ENCODE measurements at regions of chr1 and their contacts with region 1.

Region 1: GRCh38 chr1:43650310-43651085 is 549 bp downstream of the KDM4A start:
- DNase-seq: peak; percentile 100
- CTCF ChIP-seq: no peak

Region 2: DNA sequence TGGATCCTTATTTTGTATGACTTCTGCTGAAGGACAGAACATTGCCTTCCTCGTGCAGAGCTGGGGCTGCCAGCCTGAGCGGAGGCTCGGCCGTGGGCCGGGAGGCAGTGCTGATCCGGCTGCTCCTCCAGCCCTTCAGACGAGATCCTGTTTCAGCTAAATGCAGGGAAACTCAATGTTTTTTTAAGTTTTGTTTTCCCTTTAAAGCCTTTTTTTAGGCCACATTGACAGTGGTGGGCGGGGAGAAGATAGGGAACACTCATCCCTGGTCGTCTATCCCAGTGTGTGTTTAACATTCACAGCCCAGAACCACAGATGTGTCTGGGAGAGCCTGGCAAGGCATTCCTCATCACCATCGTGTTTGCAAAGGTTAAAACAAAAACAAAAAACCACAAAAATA is 28.0 kb before region 1 on chr1:
- CTCF ChIA-PET with region 1: no interaction called
- POLR2A ChIA-PET with region 1: no interaction called
- DNase-seq: no peak
- CTCF ChIP-seq: no peak

Region 3: DNA sequence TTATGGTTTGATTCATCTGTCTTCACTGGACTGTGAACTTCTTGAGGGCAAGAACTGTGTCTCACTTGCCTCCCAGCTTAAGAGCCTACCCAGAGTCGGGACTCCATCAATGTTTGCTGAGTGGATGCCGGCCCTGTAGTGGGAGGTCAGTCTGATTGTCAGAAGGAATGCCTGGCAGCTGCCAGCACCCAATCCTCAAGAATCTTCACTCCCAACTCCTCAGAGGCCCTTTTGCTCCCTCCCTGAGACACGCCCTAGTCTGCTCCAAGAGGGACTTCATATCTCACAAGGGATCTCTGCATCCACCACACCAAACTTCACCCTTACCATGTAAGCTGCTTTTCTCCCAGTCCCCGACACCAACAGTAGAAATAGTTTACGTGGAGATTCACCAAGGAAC is 15.8 kb before region 1 on chr1:
- CTCF ChIA-PET with region 1: interaction called, 4 read pairs
- POLR2A ChIA-PET with region 1: interaction called, 10 read pairs
- DNase-seq: no peak
- CTCF ChIP-seq: no peak

Region 4: GRCh38 chr1:43666608-43667007 is 16.1 kb after region 1 on chr1:
- CTCF ChIA-PET with region 1: interaction called, 8 read pairs
- POLR2A ChIA-PET with region 1: interaction called, 10 read pairs
- DNase-seq: no peak
- CTCF ChIP-seq: no peak